BJ (cell line): ENCODE measurements at regions of chr14 and their contacts with region 1.

Region 1: DNA sequence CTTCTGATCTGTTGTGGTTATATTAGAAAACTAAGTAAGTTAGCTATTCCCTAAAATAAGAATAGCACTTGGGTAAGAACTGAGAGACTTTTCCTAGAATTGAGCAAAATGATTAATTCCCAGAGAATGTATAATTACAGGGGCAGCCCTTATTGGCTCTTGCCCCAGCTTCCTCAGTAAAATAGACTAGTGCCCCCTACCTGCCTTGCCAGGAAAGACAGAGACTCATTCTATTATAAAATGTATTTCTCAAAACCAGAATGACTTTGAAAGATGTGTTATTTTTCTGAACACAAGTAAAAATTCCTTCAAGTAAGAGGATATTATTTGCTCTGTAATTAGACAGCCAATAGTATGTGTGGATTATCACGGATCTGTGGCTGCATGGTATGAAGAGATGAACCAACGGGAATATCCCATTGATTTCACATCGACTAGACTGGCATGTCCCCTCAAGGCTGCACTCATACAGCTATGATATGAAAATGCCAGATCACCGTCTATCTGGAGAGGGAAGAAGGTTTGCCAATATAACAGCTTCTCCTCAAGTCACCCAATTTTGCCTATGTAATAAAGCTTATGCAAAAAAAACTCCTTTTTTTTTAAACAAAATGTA is 7.4 kb upstream of the GLRX5 start:
- DNase-seq: peak; percentile 59
- H3K4me3 ChIP-seq: no peak overlapping the region
- H3K27me3 ChIP-seq: no peaks in the 10 kb centered on the region
- CTCF ChIP-seq: peak; percentile 76

Region 2: DNA sequence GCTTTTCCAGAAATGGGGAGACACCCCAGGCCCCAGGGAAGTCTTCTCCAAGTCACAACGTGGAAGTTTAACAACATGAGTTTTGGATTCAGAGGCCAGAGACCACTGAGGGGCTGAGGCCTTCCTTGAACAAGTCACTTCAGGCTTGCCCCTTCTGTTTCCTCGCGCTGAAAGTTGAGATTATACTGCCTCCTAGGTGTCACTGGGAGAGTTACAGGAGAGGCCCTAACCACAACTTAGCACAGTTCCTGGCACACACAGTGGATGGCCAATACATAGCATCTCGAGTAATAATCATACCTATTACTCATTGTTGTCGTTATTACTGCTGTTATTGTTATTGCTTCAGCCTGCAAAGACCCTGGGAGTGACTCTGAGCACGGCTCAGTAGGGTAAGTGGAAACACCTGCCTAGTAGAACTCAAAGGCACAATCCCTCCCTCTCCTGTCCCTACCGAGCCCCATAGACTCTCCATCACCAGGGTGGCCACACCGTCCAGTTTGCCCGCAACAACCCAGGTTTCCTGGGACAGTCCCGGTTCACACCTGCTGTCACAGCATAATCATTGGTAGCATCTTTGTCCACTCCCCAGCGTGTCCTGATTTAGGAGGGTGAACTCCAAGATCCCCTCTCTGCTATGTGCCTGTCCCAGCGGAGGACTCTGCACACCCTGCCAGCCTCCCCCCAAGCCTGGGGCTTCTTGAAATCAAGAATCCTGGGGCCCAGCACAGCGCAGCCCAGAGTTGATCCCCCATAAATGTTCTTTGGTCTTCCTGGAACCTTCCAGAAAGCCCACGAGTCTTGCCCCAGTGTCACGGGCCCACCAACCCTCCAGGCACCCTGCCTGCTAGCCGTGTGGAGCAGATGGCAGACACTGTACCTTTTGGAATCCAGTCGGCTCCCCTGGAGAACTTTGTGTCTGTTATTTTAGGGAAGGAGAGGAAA is 96.0 kb before region 1 on chr14:
- CTCF ChIA-PET with region 1: interaction called, 11 read pairs
- POLR2A ChIA-PET with region 1: no interaction called
- DNase-seq: no peak
- H3K4me3 ChIP-seq: no peak overlapping the region
- H3K27me3 ChIP-seq: no peaks in the 10 kb centered on the region
- CTCF ChIP-seq: peak; percentile 40

Region 3: GRCh38 chr14:95460647-95461478 is 66.6 kb before region 1 on chr14:
- CTCF ChIA-PET with region 1: interaction called, 28 read pairs
- POLR2A ChIA-PET with region 1: no interaction called
- DNase-seq: no peak
- H3K4me3 ChIP-seq: no peak overlapping the region
- H3K27me3 ChIP-seq: no peaks in the 10 kb centered on the region
- CTCF ChIP-seq: no peak

Region 4: DNA sequence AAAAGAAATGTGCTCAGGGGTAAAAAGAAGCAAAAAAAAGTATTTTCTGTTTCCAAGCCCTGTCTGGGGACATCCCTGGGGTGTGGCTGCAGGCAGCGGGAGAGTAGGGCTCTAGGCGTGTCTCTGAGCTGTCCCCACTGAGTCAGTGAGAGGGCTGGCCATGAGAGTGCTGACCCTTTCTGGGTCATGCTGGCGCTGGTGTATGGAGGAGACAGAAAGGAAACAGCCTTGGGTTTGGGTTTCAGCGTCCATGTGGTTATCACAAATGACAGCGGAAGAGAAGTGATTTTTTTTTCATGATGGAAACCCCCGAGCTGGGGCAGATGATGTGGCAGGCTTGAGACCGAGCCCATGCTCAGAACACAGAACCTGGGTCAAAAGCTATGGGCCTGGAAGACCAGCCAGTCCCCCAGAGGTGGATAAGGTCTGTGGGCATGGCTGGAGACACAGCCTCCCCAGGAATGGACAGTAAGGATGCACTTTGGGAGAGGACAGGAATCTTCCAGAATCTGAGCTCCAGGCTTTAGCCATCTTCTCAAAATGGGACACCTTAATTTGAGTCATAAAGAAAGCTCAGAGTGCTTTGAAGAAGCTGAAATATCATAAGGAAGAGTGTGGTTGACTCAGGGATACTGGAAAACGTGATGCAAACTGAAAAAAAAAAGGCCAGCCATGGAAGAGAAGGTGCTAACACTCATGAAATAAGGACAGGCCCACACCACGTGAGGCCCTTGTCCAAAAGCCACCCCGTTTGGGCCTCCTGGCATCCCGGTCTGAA is 47.2 kb before region 1 on chr14:
- CTCF ChIA-PET with region 1: interaction called, 12 read pairs
- POLR2A ChIA-PET with region 1: no interaction called
- DNase-seq: no peak
- H3K4me3 ChIP-seq: no peak overlapping the region
- H3K27me3 ChIP-seq: no peaks in the 10 kb centered on the region
- CTCF ChIP-seq: no peak

Region 5: GRCh38 chr14:95515596-95516552 is 11.6 kb before region 1 on chr14:
- CTCF ChIA-PET with region 1: interaction called, 19 read pairs
- POLR2A ChIA-PET with region 1: interaction called, 7 read pairs
- DNase-seq: no peak
- H3K4me3 ChIP-seq: peak overlapping the region; percentile 60
- H3K27me3 ChIP-seq: no peaks in the 10 kb centered on the region
- CTCF ChIP-seq: peak; percentile 56

Region 6: GRCh38 chr14:96297000-96297399 is 769.5 kb after region 1 on chr14:
- CTCF ChIA-PET with region 1: no interaction called
- POLR2A ChIA-PET with region 1: no interaction called
- DNase-seq: no peak
- H3K4me3 ChIP-seq: no peak overlapping the region
- H3K27me3 ChIP-seq: no peaks in the 10 kb centered on the region
- CTCF ChIP-seq: peak; percentile 46